AG04449 (cell line): ENCODE measurements at regions of chr1 and their contacts with region 1.

Region 1: DNA sequence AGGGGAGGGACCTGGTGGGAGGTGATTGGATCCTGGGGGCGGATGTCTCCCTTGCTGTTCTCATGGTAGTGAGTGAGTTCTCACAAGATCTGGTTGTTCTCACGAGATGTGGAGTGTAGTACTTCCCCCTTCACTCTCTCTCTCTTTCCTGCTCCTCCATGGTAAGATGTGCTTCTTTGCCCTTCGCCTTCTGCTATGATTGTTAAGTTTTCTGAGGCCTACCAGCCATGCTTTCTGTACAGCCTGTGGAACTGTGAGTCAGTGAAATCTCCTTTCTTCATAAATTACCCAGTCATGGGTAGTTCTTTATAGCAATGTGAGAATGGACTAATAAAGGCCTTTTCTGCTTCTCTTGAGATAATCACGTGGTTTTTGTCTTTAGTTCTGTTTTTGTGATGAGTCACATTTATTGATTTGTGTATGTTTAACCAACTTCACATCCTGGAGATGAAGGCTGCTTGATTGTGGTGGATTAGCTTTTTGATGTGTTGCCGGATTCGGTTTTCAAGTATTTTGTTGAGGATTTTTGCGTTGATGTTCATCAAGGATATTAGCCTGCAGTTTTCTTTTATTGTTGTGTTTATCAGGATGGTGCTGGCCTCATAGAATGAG is 45.5 kb downstream of the RABGAP1L start:
- DNase-seq: no peak
- H3K4me3 ChIP-seq: no peak overlapping the region
- CTCF ChIP-seq: no peak

Region 2: GRCh38 chr1:173886746-173887611 is 317.8 kb before region 1 on chr1:
- CTCF ChIA-PET with region 1: no interaction called
- POLR2A ChIA-PET with region 1: no interaction called
- DNase-seq: no peak
- H3K4me3 ChIP-seq: no peak overlapping the region
- CTCF ChIP-seq: no peak

Region 3: DNA sequence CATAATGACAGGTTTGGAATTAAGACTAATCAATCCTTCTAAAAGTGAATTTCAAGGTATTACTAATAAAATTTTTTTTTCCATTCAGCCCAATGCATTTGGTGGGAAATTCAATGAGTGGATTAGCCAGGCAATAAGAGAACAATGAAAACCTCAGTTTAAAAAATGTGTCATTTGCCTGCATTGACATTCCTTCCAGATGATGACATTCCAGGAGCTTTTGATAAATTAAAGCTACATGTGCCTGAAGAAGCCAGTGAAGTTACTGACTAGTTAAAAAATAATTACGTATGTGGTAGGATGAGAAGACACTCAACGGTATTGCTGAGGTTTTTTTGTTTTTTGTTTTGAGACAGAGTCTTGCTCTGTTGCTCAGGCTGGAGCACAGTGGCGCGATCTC is 144.7 kb before region 1 on chr1:
- CTCF ChIA-PET with region 1: no interaction called
- POLR2A ChIA-PET with region 1: no interaction called
- DNase-seq: no peak
- H3K4me3 ChIP-seq: no peak overlapping the region
- CTCF ChIP-seq: no peak

Region 4: GRCh38 chr1:174217787-174218574 is 13.2 kb after region 1 on chr1:
- CTCF ChIA-PET with region 1: interaction called, 31 read pairs
- POLR2A ChIA-PET with region 1: no interaction called
- DNase-seq: no peak
- H3K4me3 ChIP-seq: no peak overlapping the region
- CTCF ChIP-seq: peak; percentile 54